ENCODE measurements at regions of chr3 and their contacts with region 1.

Region 1: GRCh38 chr3:160449636-160450598 is at the start of gene TRIM59:
- DNase-seq: peak; percentile 98

Region 2: DNA sequence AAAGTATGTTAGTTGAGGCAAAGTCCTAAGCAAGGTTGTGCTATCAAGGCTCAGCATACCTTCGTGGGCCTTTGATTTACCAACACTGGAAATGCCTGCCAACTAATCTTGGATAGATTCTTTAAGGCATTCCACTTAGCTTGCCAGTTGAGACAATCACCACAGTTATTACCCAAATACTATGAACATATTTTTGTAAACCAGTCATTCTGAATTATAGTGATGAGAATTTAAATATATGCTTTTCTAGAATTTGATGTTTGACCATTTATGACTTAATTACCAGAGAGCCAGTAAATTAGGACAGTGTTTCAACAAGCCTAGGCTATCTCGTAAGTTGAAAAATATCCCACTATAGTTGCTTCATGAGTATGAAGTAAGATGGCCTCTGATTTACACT is 15.8 kb before region 1 on chr3:
- CTCF ChIA-PET with region 1: no interaction called
- POLR2A ChIA-PET with region 1: interaction called, 13 read pairs
- DNase-seq: no peak

Region 3: GRCh38 chr3:160460033-160460432 is 10.1 kb after region 1 on chr3:
- CTCF ChIA-PET with region 1: no interaction called
- POLR2A ChIA-PET with region 1: interaction called, 20 read pairs
- DNase-seq: no peak

Region 4: DNA sequence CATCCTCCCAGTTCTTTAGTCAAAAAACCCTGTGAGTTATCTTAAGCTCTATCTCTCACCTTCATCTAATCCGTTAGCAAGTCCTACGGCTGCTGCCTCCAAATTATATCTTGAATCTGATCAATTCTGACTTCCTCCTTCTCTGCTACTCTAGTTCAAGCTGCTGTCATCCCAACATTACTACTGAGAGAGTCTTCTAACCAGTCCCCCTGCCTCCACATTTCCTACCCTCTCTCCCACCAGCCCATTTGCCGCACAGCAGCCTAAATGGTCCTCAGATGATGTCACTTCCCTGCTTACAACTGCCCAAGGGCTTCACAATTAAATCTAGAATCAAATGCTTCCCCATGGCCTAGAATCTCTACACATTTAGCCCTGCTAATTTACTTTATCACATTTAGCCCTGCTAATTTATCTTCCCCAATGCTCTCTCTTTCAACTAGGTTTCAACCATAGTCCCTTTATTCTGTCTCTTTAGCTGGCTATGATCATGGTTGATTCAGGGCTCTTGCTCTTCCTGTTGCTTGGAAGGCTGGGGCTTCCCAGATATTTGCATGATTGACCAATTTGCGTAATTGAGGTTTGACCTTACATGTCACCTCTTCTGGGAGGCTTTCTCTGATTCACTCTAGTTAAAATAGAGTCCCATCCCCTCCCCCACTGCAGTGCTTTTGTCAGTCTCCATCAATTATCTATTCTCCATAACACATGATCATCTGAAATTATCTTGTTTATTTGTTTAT is 216.0 kb after region 1 on chr3:
- CTCF ChIA-PET with region 1: no interaction called
- POLR2A ChIA-PET with region 1: no interaction called
- DNase-seq: no peak